Activated CD8-positive, alpha-beta T cell treated with anti-CD3 and anti-CD28 coated beads, Interleukin-2, amount 10 ng/mL, durations not matched to agents 7 days and 5 days (primary cell): ENCODE measurements at regions of chr13 and their contacts with region 1.

Region 1: GRCh38 chr13:99269627-99270241 is 11.6 kb upstream of the GPR18 start:
- DNase-seq: peak; percentile 46
- ATAC-seq: peak; percentile 62
- H3K4me3 Mint-ChIP-seq: no peak overlapping the region
- H3K27ac Mint-ChIP-seq: no peak overlapping the region
- H3K4me1 Mint-ChIP-seq: peaks cover 64% of the 10 kb centered on the region
- H3K27me3 Mint-ChIP-seq: no peaks in the 10 kb centered on the region

Region 2: DNA sequence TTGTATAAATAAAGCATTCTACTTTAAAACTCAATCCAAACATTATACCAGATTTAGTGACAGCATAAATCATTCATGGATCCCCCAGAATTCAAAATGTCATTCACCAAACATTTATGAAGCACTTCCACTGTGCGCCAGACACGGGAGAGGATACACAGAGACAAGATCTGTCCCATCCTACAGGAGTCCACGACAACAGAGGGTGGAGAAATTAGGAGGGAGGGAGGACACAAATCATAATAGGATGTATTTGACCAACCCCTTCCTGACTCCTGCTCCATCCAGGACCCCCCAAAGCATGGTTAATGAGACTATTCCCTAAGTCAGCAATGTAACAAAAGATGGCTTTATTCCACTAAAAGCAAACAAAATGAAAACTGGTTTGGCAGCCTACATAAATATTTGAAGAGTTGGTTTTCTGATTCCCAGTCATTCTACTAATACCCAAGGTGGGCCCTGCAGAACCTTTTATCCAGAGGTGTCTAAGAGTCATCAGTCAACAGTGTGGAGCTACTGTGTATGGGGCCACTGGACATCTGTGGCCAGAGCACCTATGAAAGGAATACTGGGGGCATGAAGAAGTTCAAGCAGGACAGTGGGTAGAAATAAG is 229.1 kb before region 1 on chr13:
- CTCF ChIA-PET with region 1: no interaction called
- POLR2A ChIA-PET with region 1: no interaction called
- DNase-seq: no peak
- ATAC-seq: no peak
- H3K4me3 Mint-ChIP-seq: no peak overlapping the region
- H3K27ac Mint-ChIP-seq: no peak overlapping the region
- H3K4me1 Mint-ChIP-seq: peaks cover 52% of the 10 kb centered on the region
- H3K27me3 Mint-ChIP-seq: no peaks in the 10 kb centered on the region

Region 3: GRCh38 chr13:99185606-99186005 is 84.1 kb before region 1 on chr13:
- CTCF ChIA-PET with region 1: interaction called, 319 read pairs
- POLR2A ChIA-PET with region 1: no interaction called
- DNase-seq: no peak
- ATAC-seq: no peak
- H3K4me3 Mint-ChIP-seq: no peak overlapping the region
- H3K27ac Mint-ChIP-seq: no peak overlapping the region
- H3K4me1 Mint-ChIP-seq: peaks cover 1% of the 10 kb centered on the region
- H3K27me3 Mint-ChIP-seq: no peaks in the 10 kb centered on the region

Region 4: DNA sequence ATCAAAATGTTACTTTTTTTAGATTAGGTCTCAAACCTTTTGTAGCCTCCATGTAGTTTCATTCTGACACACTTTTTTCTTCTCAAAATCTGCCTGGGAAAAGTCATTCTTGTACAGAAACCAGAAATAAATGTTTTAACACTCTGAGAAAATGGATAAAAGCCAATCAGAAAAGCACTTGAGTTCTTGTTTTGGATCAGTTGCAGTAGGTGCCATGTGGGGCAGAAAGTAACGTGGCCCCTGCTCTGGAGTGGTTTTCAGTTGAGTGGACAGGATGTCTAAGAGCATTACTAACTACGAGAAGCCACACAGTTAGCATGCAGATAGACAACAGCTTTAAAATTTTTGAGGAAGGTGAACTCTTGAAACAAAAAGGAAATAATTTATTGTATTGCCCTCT is 18.4 kb after region 1 on chr13:
- CTCF ChIA-PET with region 1: interaction called, 18 read pairs
- POLR2A ChIA-PET with region 1: interaction called, 3 read pairs
- DNase-seq: peak; percentile 50
- ATAC-seq: peak; percentile 62
- H3K4me3 Mint-ChIP-seq: no peak overlapping the region
- H3K27ac Mint-ChIP-seq: peak overlapping the region; percentile 48
- H3K4me1 Mint-ChIP-seq: peaks cover 76% of the 10 kb centered on the region
- H3K27me3 Mint-ChIP-seq: no peaks in the 10 kb centered on the region

Region 5: DNA sequence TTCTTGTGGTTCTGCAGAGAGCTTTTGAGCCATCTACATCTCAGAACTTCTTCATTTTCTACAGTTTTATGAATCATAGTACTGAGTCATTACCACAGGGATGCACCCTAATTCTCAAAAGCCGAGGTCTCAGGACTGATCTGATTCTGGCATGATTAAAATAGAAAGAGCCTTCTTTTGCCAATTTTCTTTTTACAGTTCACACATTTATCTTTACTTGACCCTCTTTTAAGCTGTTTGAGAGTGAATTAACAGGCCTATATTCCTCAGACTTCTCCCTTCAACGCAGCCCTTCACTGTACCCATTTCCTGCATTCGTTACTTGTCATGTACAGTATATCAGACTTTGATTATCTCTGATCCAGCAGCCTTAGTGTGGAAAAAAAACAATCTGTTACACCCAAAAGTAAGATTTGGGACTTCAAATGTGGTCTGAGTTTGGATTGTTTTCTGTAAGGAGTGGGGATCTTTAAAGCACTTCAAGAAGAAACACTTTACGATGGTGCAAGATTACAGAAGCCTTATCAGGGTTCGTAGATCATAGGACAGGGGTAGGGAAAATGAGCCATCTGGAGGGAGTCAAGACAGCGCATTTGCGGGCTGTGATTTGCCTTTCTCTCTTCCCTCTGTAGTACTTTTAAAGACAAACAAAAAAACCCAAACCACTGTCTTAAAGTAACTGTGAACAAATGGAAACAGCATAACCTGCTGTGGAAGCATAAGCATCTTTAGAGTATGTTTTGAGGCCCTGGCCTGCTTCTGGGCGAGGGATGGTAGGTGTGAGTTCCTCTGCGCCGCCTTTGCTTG is 52.8 kb after region 1 on chr13:
- CTCF ChIA-PET with region 1: interaction called, 11 read pairs
- POLR2A ChIA-PET with region 1: no interaction called
- DNase-seq: peak; percentile 40
- ATAC-seq: peak; percentile 79
- H3K4me3 Mint-ChIP-seq: peak overlapping the region; percentile 51
- H3K27ac Mint-ChIP-seq: peak overlapping the region; percentile 89
- H3K4me1 Mint-ChIP-seq: peaks cover 61% of the 10 kb centered on the region
- H3K27me3 Mint-ChIP-seq: no peaks in the 10 kb centered on the region

Region 6: GRCh38 chr13:99374994-99375737 is 105.4 kb after region 1 on chr13:
- CTCF ChIA-PET with region 1: interaction called, 16 read pairs
- POLR2A ChIA-PET with region 1: interaction called, 6 read pairs
- DNase-seq: peak; percentile 21
- ATAC-seq: peak; percentile 37
- H3K4me3 Mint-ChIP-seq: peak overlapping the region; percentile 51
- H3K27ac Mint-ChIP-seq: peak overlapping the region; percentile 81
- H3K4me1 Mint-ChIP-seq: peaks cover 85% of the 10 kb centered on the region
- H3K27me3 Mint-ChIP-seq: no peaks in the 10 kb centered on the region

Region 7: DNA sequence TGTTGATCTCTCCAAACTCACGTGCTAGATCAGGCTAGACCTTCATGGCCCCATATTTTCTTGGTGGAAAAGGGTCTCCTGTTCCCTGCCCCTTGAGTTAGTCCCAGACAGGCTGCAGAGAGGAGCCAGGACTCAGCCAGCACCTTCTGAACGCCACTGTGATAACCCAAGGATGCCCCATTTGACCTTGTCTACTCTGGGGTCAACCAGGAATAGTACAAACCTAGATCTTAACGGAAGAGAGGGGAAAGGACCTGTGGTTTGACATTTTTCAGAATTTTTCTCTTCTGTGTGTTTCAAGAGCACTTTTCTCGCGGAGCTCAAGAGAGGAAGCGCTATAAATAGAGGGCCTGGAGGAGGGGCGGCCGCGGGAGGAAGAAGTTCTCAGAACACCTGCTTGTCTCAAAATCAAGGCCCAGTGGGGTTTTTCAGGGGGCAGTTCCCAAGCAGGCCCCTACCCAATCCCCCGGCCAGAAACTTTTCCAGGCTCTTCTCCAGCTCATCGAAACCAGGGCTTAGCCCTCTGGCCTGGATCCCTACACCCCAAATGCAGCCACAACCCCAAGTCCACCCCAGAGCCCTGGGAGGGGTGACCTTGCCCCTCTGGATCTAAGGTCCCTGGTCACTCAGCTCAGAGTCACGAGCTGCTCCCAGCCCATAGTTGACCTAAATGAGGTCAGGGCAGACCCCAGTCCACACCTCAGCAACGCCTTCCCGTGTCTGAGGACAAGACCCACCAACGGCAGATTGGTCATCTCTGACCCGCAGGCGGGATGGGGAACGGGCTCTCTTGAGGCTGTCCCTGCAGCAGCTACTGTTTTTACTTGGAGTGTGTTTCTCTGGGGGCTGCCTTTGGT is 156.0 kb after region 1 on chr13:
- CTCF ChIA-PET with region 1: interaction called, 15 read pairs
- POLR2A ChIA-PET with region 1: no interaction called
- DNase-seq: peak; percentile 78
- ATAC-seq: peak; percentile 64
- H3K4me3 Mint-ChIP-seq: peak overlapping the region; percentile 64
- H3K27ac Mint-ChIP-seq: peak overlapping the region; percentile 89
- H3K4me1 Mint-ChIP-seq: peaks cover 75% of the 10 kb centered on the region
- H3K27me3 Mint-ChIP-seq: no peaks in the 10 kb centered on the region